ENCODE measurements at regions of chr12 and their contacts with region 1.

Region 1: GRCh38 chr12:124036674-124037109 is 63.7 kb downstream of the ZNF664 start:
- DNase-seq: no peak
- H3K4me3 ChIP-seq: no peak overlapping the region
- H3K27ac ChIP-seq: no peak overlapping the region
- H3K4me1 ChIP-seq: peaks cover 0 to 4% (median 0%) of the 10 kb centered on the region in 4 donors
- H3K27me3 ChIP-seq: no peaks in the 10 kb centered on the region
- CTCF ChIP-seq: peak; percentile 90 to 92

Region 2: GRCh38 chr12:123787466-123787865 is 249.2 kb before region 1 on chr12:
- intact Hi-C with region 1: no loop called
- DNase-seq: peak in 1 of 2 donors; percentile 59
- H3K4me3 ChIP-seq: no peak overlapping the region
- H3K27ac ChIP-seq: no peak overlapping the region
- H3K4me1 ChIP-seq: no peaks in the 10 kb centered on the region
- H3K27me3 ChIP-seq: peaks cover 0 to 9% of the 10 kb centered on the region in 2 donors
- CTCF ChIP-seq: no peak

Region 3: DNA sequence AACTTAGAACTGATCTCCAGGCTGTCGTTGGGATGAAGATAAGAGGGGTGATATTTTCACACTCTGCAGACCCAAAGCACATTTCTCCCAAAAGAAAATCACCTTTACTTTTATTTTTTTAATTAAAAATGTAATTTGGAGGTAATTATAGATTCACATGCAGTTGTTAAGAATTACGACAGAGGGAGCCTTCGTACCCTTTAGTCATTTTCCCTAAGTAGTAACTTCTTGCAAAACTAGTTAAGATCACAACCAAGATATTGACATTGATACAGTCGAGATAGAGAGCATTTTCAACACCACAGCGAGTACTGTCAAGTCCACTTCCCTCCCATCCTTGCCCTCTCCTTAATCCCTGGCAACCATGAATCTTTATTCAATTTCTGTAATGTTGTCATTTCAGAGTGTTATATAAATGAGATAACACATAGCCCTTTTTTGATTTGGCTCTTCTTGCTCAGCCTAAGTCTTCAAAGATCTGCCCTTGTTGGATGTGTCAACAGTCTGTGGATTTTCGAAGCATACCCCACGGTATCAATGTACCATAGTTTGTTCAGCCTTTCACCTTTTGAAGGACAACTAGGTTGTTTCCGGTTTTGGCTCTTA is 235.0 kb before region 1 on chr12:
- intact Hi-C with region 1: no loop called
- DNase-seq: no peak
- H3K4me3 ChIP-seq: no peak overlapping the region
- H3K27ac ChIP-seq: no peak overlapping the region
- H3K4me1 ChIP-seq: no peaks in the 10 kb centered on the region
- H3K27me3 ChIP-seq: peaks cover 0 to 12% of the 10 kb centered on the region in 2 donors
- CTCF ChIP-seq: no peak

Region 4: DNA sequence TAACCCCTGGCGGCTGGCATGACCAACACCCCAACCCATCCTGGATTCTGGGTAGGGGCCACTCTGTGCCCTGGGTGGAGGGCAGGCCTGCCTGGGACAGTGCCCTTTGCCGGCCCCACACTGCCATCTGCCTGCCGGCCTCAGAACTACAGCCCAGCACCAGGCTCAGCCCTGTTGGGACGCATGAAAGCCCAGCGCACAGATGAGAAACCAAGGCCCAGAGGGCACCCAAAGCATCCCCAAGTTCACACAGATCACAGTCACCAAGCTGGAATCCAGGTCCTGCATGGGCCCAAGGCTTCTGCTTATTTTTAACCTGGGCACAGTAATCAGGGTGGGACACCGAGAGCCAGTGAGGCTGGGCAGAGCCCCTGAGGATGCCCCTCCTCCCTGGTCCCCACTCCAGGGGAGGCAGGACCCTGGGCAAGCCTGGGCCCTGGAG is 284.4 kb after region 1 on chr12:
- intact Hi-C with region 1: loop called (anchors 2 kb)
- DNase-seq: peak; percentile 60 to 81
- H3K4me3 ChIP-seq: no peak overlapping the region
- H3K27ac ChIP-seq: peak overlapping the region in 1 of 2 donors; percentile 13
- H3K4me1 ChIP-seq: peaks cover 0 to 12% (median 7%) of the 10 kb centered on the region in 4 donors
- H3K27me3 ChIP-seq: no peaks in the 10 kb centered on the region
- CTCF ChIP-seq: peak; percentile 91 to 95

Measured in tibial artery (tissue), 4 donors.